CD8-positive, alpha-beta memory T cell (primary cell): ENCODE measurements at regions of chr5 and their contacts with region 1.

Region 1: GRCh38 chr5:172770675-172771438 is at the start of gene DUSP1:
- DNase-seq: peak; percentile 96 to 100 (median 98)
- H3K4me3 ChIP-seq: peak within 1 kb of the TSS; percentile 87
- H3K4me3 Mint-ChIP-seq: peak within 1 kb of the TSS; percentile 94 to 98 (median 96)
- H3K27ac ChIP-seq: peak within 1 kb of the TSS; percentile 100
- H3K27ac Mint-ChIP-seq: peak within 1 kb of the TSS; percentile 97 to 100 (median 100)
- H3K4me1 ChIP-seq: peaks cover 48% of the 10 kb centered on the region
- H3K4me1 Mint-ChIP-seq: peaks cover 69 to 80% (median 71%) of the 10 kb centered on the region in 3 donors
- H3K27me3 ChIP-seq: no peaks in the 10 kb centered on the region
- H3K27me3 Mint-ChIP-seq: peaks cover 0 to 31% of the 10 kb centered on the region in 2 donors
- total RNA-seq, gene DUSP1: 9.4 to 10.9 TPM

Region 2: DNA sequence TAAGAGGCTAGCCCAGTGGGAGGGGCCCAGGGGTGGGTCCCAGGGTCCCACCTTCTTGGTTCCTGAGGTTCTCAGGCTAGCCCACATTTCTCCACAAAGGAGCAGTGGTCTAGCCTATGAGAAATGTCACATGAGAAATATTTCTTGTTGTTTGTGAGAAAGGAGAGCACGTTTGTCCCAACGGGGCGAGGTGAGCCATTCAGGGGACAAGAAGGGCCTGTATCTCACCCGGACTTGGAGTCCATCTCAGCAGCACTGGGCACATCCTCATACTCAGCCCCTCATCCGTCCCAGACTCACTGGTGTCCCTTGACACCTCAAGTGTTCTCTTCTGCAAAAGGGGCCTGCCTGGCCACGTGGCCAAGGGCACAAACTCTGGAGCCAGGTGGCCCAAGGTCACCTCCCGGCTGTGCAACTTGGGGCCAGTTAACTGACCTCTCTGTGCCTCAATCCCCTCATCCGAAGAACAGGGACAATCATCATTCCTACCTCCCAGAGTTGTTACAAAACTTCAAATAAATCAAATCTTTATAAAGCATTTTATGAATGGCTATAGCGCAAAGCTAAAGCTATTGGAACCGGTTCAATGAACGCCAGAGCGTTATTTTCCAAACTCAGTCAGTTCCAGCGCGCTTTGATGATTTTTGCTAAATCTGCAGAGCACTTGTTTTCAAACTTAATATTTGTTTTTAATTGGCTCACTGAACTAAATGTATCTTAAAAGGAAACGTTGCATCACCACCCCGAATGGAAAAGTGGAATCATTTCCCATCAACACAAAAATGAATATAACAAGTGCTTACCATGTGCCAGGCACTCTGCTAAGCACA is 49.3 kb before region 1 on chr5:
- CTCF ChIA-PET with region 1: interaction called, 31 read pairs
- POLR2A ChIA-PET with region 1: interaction called, 8 read pairs
- DNase-seq: no peak
- H3K4me3 ChIP-seq: no peak overlapping the region
- H3K4me3 Mint-ChIP-seq: peak overlapping the region in 6 of 7 donors; percentile 3 to 90 (median 70)
- H3K27ac ChIP-seq: no peak overlapping the region
- H3K27ac Mint-ChIP-seq: peak overlapping the region; percentile 45 to 96 (median 91)
- H3K4me1 ChIP-seq: peaks cover 25% of the 10 kb centered on the region
- H3K4me1 Mint-ChIP-seq: peaks cover 23 to 35% (median 27%) of the 10 kb centered on the region in 3 donors
- H3K27me3 ChIP-seq: no peaks in the 10 kb centered on the region
- H3K27me3 Mint-ChIP-seq: no peaks in the 10 kb centered on the region

Region 3: GRCh38 chr5:172806897-172807672 is 36.2 kb after region 1 on chr5:
- CTCF ChIA-PET with region 1: interaction called, 6 read pairs
- POLR2A ChIA-PET with region 1: interaction called, 21 read pairs
- DNase-seq: peak; percentile 56 to 91 (median 80)
- H3K4me3 ChIP-seq: peak overlapping the region; percentile 59
- H3K4me3 Mint-ChIP-seq: peak overlapping the region; percentile 13 to 90 (median 81)
- H3K27ac ChIP-seq: peak overlapping the region; percentile 76
- H3K27ac Mint-ChIP-seq: peak overlapping the region; percentile 83 to 97 (median 95)
- H3K4me1 ChIP-seq: peaks cover 11% of the 10 kb centered on the region
- H3K4me1 Mint-ChIP-seq: peaks cover 13 to 19% (median 14%) of the 10 kb centered on the region in 3 donors
- H3K27me3 ChIP-seq: no peaks in the 10 kb centered on the region
- H3K27me3 Mint-ChIP-seq: no peaks in the 10 kb centered on the region

Region 4: DNA sequence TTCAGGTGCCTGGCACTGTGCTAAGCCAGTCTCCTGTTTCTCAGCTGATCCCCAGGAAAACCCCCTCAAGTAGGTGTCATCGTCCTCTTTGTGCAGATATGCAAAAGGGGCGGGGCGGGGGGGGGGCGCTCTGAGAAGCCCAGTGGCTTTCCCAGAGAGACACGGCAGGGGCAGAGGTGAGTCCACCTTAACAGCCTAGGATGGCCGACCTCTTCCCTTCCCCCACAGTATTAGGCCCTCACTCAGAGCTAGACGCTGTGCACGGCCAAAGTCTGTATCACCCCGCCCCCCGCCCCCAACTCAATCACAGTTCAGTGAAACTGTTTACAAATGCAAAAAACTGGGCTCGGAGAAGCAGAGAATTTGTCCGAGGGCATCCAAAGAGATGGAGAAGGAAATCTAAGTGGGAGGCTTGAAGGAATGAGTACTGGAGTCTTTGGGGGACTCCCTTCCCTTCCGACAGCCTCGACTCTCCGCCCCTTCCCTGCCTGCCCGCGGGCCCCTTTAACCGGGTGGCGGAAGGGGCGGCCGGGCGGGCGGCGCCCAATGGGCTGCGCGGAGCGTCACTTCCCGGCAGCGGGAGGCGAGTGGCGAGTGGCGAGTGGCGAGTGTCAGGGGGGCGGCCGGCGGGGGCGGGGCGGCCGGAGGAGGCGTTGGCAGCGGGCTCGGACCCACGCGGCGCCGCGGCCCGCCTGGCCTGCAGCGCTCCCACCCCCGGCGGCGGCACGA is 63.0 kb after region 1 on chr5 and contains the start of gene ERGIC1:
- CTCF ChIA-PET with region 1: interaction called, 55 read pairs
- POLR2A ChIA-PET with region 1: interaction called, 26 read pairs
- DNase-seq: peak; percentile 71 to 80 (median 74)
- H3K4me3 ChIP-seq: peak within 1 kb of the TSS; percentile 59
- H3K4me3 Mint-ChIP-seq: peak within 1 kb of the TSS; percentile 90 to 96 (median 92)
- H3K27ac ChIP-seq: peak within 1 kb of the TSS; percentile 55
- H3K27ac Mint-ChIP-seq: peak within 1 kb of the TSS; percentile 89 to 99 (median 96)
- H3K4me1 ChIP-seq: peaks cover 36% of the 10 kb centered on the region
- H3K4me1 Mint-ChIP-seq: peaks cover 33 to 48% (median 38%) of the 10 kb centered on the region in 3 donors
- H3K27me3 ChIP-seq: no peaks in the 10 kb centered on the region
- H3K27me3 Mint-ChIP-seq: no peaks in the 10 kb centered on the region
- total RNA-seq, gene ERGIC1: 39.7 to 39.9 TPM

Region 5: DNA sequence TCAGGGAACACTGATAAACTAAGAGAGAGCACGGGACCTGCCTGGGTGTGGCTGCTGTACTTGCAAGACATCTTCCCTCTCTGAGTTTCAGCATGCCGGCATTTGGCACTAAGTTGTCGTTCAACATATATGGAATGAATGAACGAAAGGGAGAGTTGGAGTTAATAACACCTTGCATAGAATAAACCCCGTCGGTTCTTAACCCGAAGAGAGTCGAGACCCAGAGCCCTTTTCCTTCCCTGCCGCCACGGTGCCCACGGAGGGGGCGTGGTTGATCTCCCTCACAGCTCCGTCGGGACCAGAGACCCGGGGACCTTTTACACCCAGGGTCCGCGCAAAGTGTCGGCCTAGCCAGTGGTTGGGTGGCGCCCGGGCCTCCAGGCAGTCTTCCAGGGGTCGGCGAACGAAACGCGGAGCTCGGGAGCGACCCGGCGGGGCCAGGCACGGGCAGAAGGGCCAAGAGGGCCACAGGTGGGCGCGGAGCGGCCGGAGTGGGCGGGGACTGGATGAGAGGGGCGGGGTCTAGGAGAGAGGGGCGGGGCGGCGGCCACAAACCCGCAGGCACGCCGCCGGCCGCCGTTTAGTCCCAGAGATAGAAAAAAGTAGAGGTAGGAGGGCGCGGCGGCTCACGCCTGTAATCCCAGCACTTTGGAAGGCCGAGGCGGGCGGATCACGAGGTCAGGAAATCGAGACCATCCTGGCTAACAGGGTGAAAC is 187.6 kb after region 1 on chr5:
- CTCF ChIA-PET with region 1: interaction called, 4 read pairs
- POLR2A ChIA-PET with region 1: interaction called, 15 read pairs
- DNase-seq: peak; percentile 53 to 73 (median 64)
- H3K4me3 ChIP-seq: peak overlapping the region; percentile 98
- H3K4me3 Mint-ChIP-seq: peak overlapping the region; percentile 95 to 99 (median 96)
- H3K27ac ChIP-seq: peak overlapping the region; percentile 77
- H3K27ac Mint-ChIP-seq: peak overlapping the region; percentile 96 to 99 (median 98)
- H3K4me1 ChIP-seq: peaks cover 18% of the 10 kb centered on the region
- H3K4me1 Mint-ChIP-seq: peaks cover 33 to 43% (median 43%) of the 10 kb centered on the region in 3 donors
- H3K27me3 ChIP-seq: no peaks in the 10 kb centered on the region
- H3K27me3 Mint-ChIP-seq: peaks cover 0 to 2% of the 10 kb centered on the region in 2 donors

Region 6: DNA sequence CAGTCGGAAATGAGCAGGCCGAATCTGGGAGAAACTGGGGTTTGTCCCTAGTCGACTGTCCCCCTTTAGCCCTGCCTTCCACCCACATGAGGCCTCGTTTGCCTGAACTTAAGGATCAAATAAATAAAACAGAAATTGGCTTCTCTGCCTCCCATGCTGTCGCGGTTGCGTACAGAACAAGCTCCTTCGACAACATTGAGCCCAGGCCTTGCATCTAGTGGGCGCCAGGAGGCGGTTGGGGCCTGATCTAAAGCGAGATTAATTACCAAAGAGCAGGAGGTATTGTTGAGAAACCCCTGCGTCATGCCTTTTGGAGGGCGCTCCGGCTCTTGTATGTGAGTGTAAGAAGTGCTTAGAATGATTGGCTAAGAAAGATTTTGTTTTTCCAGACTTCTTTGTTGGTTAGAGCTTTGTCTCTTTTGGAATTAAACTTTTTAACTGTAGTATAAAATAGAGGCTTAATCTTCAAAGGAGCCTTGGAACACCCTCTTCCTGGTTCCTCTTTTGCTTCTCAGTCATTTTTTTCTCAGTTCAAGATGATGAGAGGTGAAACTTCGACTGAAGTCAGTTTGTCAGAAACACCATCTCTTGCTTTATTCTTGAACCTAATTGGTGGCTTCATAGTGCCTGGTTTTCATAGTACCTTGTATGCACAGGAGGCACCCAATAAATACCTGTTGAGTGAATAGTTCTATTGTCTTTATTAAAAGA is 213.5 kb after region 1 on chr5:
- CTCF ChIA-PET with region 1: no interaction called
- POLR2A ChIA-PET with region 1: interaction called, 11 read pairs
- DNase-seq: peak; percentile 53 to 85 (median 73)
- H3K4me3 ChIP-seq: peak overlapping the region; percentile 98
- H3K4me3 Mint-ChIP-seq: peak overlapping the region; percentile 89 to 99 (median 98)
- H3K27ac ChIP-seq: peak overlapping the region; percentile 97
- H3K27ac Mint-ChIP-seq: peak overlapping the region; percentile 84 to 100 (median 99)
- H3K4me1 ChIP-seq: peaks cover 29% of the 10 kb centered on the region
- H3K4me1 Mint-ChIP-seq: peaks cover 41 to 69% (median 43%) of the 10 kb centered on the region in 3 donors
- H3K27me3 ChIP-seq: no peaks in the 10 kb centered on the region
- H3K27me3 Mint-ChIP-seq: no peaks in the 10 kb centered on the region

Region 7: DNA sequence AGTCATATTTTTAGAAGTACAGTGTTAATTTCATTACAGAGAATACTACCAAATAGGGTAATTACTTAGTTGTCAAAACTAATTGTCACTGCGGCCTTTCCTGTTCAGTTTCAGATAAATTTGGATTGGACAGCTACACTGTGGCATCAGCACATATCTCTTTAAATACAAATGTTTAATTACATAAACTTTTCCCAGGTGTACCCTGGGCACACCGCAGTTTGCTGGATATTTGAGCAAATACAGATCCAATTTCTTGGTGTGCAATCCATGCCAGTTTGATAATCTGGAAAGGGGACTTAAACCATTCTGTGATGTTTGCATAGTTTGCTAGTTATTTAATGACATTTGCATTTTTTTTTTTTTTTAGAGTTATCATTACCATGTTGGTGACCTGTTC is 223.5 kb after region 1 on chr5:
- CTCF ChIA-PET with region 1: no interaction called
- POLR2A ChIA-PET with region 1: no interaction called
- DNase-seq: no peak
- H3K4me3 ChIP-seq: no peak overlapping the region
- H3K4me3 Mint-ChIP-seq: no peak overlapping the region
- H3K27ac ChIP-seq: no peak overlapping the region
- H3K27ac Mint-ChIP-seq: peak overlapping the region in 3 of 8 donors; percentile 38 to 77 (median 50)
- H3K4me1 ChIP-seq: peaks cover 6% of the 10 kb centered on the region
- H3K4me1 Mint-ChIP-seq: peaks cover 28 to 65% (median 38%) of the 10 kb centered on the region in 3 donors
- H3K27me3 ChIP-seq: no peaks in the 10 kb centered on the region
- H3K27me3 Mint-ChIP-seq: no peaks in the 10 kb centered on the region